MCF 10A (cell line): ENCODE measurements at regions of chr10 and their contacts with region 1.

Region 1: DNA sequence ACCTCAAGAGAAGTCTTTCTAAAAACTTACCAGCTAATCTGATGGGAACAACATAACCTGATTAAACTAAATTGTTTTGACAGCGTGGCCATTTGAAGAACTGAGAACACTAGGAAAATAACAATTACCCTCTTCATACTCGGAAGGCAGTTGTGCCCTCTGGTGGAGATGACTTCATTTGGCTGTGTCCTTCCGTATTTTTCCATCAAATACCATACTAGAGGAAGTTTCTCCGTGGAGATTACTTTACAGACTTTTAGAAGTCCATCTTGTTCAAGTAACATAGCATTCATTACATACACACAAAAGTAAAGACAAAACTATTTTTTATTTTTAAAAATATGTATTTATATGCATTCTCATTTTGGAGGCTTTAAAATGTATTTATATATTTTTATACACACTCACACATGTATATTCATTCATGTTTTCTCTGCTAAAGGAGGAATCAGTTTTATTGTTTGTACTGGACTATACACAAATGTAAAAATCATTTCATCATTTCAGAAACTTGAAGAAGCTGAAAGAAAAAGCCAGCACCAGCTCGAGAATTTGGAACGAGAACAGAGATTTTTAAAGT is 25.2 kb downstream of the SMNDC1 start:
- DNase-seq: peak; percentile 71
- H3K4me3 Mint-ChIP-seq: no peak overlapping the region
- H3K27ac Mint-ChIP-seq: no peak overlapping the region
- H3K4me1 Mint-ChIP-seq: no peaks in the 10 kb centered on the region
- H3K27me3 Mint-ChIP-seq: no peaks in the 10 kb centered on the region
- CTCF ChIP-seq: peak; percentile 80

Region 2: GRCh38 chr10:110225756-110226542 is 53.5 kb before region 1 on chr10:
- CTCF ChIA-PET with region 1: interaction called, 10 read pairs
- POLR2A ChIA-PET with region 1: interaction called, 4 read pairs
- intact Hi-C with region 1: loop called (anchors 2 kb)
- DNase-seq: peak; percentile 92
- H3K4me3 Mint-ChIP-seq: peak overlapping the region; percentile 81
- H3K27ac Mint-ChIP-seq: peak overlapping the region; percentile 67
- H3K4me1 Mint-ChIP-seq: peaks cover 33% of the 10 kb centered on the region
- H3K27me3 Mint-ChIP-seq: no peaks in the 10 kb centered on the region
- CTCF ChIP-seq: peak; percentile 63

Region 3: GRCh38 chr10:110244550-110244949 is 34.9 kb before region 1 on chr10:
- CTCF ChIA-PET with region 1: interaction called, 12 read pairs
- POLR2A ChIA-PET with region 1: no interaction called
- intact Hi-C with region 1: no loop called
- DNase-seq: no peak
- H3K4me3 Mint-ChIP-seq: no peak overlapping the region
- H3K27ac Mint-ChIP-seq: no peak overlapping the region
- H3K4me1 Mint-ChIP-seq: peaks cover 21% of the 10 kb centered on the region
- H3K27me3 Mint-ChIP-seq: no peaks in the 10 kb centered on the region
- CTCF ChIP-seq: no peak

Region 4: DNA sequence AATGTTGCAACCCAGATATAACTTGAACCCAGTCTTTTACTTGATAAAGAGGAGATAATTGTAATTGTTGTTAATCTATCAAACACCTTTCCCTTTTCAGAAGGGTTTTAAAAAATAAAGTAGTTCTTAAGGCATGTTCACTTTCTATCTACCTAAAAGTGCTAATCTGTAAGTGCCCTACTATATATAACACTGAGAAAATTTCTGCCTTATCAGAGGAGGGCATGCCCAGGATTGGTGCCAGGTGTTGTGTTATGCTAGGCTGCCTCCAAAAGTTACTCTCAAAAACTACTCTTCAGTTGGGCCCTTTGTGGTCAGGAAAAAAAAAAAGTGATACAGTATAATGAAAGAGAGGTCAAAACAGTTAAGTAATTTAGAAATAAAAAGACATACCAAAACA is 11.1 kb before region 1 on chr10:
- CTCF ChIA-PET with region 1: interaction called, 12 read pairs
- POLR2A ChIA-PET with region 1: interaction called, 3 read pairs
- intact Hi-C with region 1: no loop called
- DNase-seq: no peak
- H3K4me3 Mint-ChIP-seq: no peak overlapping the region
- H3K27ac Mint-ChIP-seq: no peak overlapping the region
- H3K4me1 Mint-ChIP-seq: peaks cover 17% of the 10 kb centered on the region
- H3K27me3 Mint-ChIP-seq: no peaks in the 10 kb centered on the region
- CTCF ChIP-seq: no peak

Region 5: DNA sequence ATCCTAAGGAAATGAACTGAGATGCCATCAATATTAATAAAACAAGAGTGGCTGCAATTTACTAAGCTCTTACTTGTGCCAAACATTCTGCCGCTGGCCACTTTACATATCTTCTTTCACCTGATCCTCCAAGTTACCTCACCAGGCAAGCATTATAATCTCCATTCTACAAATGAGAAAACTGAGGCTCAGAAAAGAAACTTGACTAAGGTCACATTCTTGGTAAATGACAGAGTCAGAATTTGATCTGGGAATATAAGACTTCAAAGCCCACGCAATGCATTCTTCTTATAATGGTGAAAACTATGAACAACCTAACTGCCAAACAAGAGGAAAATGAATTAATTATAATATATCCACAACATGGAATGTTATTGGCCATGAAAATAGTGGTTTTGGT is 71.3 kb after region 1 on chr10:
- CTCF ChIA-PET with region 1: no interaction called
- POLR2A ChIA-PET with region 1: no interaction called
- intact Hi-C with region 1: no loop called
- DNase-seq: no peak
- H3K4me3 Mint-ChIP-seq: no peak overlapping the region
- H3K27ac Mint-ChIP-seq: no peak overlapping the region
- H3K4me1 Mint-ChIP-seq: peaks cover 30% of the 10 kb centered on the region
- H3K27me3 Mint-ChIP-seq: no peaks in the 10 kb centered on the region
- CTCF ChIP-seq: no peak